GM10248 (cell line): ENCODE measurements at regions of chr20 and their contacts with region 1.

Region 1: GRCh38 chr20:8780915-8781314 is 288.0 kb upstream of the PLCB4 start:
- DNase-seq: no peak
- CTCF ChIP-seq: no peak

Region 2: GRCh38 chr20:8756410-8756809 is 24.5 kb before region 1 on chr20:
- CTCF ChIA-PET with region 1: interaction called, 11 read pairs
- POLR2A ChIA-PET with region 1: no interaction called
- DNase-seq: no peak
- CTCF ChIP-seq: no peak

Region 3: GRCh38 chr20:8796088-8796660 is 15.3 kb after region 1 on chr20:
- CTCF ChIA-PET with region 1: no interaction called
- POLR2A ChIA-PET with region 1: no interaction called
- DNase-seq: no peak
- CTCF ChIP-seq: no peak